H1 (cell line): ENCODE measurements at regions of chr11 and their contacts with region 1.

Region 1: GRCh38 chr11:14300661-14301304 is 58.2 kb downstream of the RRAS2 start:
- DNase-seq: peak in 1 of 2 experiments; percentile 23
- H3K4me3 ChIP-seq: no peak overlapping the region
- H3K27ac ChIP-seq: no peak overlapping the region
- H3K4me1 ChIP-seq: peaks cover 0 to 27% (median 5%) of the 10 kb centered on the region in 4 experiments; a peak in 5 of 7 replicates
- H3K27me3 ChIP-seq: no peaks in the 10 kb centered on the region
- CTCF ChIP-seq: peak; percentile 35 to 91 (median 88)
- EP300 ChIP-seq: no peak
- POLR2A ChIP-seq: no peak
- RAD21 ChIP-seq: peak; percentile 94 to 96

Region 2: GRCh38 chr11:14163576-14163975 is 137.2 kb before region 1 on chr11:
- CTCF ChIA-PET with region 1: no interaction called
- POLR2A ChIA-PET with region 1: no interaction called
- DNase-seq: no peak
- H3K4me3 ChIP-seq: no peak overlapping the region
- H3K27ac ChIP-seq: no peak overlapping the region
- H3K4me1 ChIP-seq: no peaks in the 10 kb centered on the region
- H3K27me3 ChIP-seq: no peaks in the 10 kb centered on the region
- CTCF ChIP-seq: no peak
- EP300 ChIP-seq: no peak
- POLR2A ChIP-seq: no peak
- RAD21 ChIP-seq: no peak

Region 3: GRCh38 chr11:14320020-14320419 is 19.2 kb after region 1 on chr11:
- CTCF ChIA-PET with region 1: interaction called, 14 read pairs
- POLR2A ChIA-PET with region 1: interaction called, 5 read pairs
- DNase-seq: no peak
- H3K4me3 ChIP-seq: no peak overlapping the region
- H3K27ac ChIP-seq: no peak overlapping the region; the same call in 1 of the 2 replicates
- H3K4me1 ChIP-seq: peaks cover 6 to 13% (median 7%) of the 10 kb centered on the region in 4 experiments; a peak in 5 of 7 replicates
- H3K27me3 ChIP-seq: no peaks in the 10 kb centered on the region
- CTCF ChIP-seq: no peak
- EP300 ChIP-seq: no peak
- POLR2A ChIP-seq: no peak
- RAD21 ChIP-seq: no peak

Region 4: GRCh38 chr11:14358729-14359439 is 58.1 kb after region 1 on chr11 and contains the start of gene RRAS2:
- CTCF ChIA-PET with region 1: interaction called, 11 read pairs
- POLR2A ChIA-PET with region 1: interaction called, 12 read pairs
- DNase-seq: peak in 1 of 2 experiments; percentile 84
- H3K4me3 ChIP-seq: peak within 1 kb of the TSS; percentile 85 to 99 (median 94)
- H3K27ac ChIP-seq: peak within 1 kb of the TSS; percentile 78; the same call in 1 of the 2 replicates
- H3K4me1 ChIP-seq: peaks cover 0 to 7% (median 4%) of the 10 kb centered on the region in 4 experiments; a peak in 6 of 7 replicates
- H3K27me3 ChIP-seq: no peaks in the 10 kb centered on the region
- CTCF ChIP-seq: no peak
- EP300 ChIP-seq: no peak
- POLR2A ChIP-seq: peak; percentile 74 to 81; a peak in 2 of 3 replicates
- RAD21 ChIP-seq: no peak
- total RNA-seq, gene RRAS2: 220 and 234 TPM in 2 replicates

Region 5: DNA sequence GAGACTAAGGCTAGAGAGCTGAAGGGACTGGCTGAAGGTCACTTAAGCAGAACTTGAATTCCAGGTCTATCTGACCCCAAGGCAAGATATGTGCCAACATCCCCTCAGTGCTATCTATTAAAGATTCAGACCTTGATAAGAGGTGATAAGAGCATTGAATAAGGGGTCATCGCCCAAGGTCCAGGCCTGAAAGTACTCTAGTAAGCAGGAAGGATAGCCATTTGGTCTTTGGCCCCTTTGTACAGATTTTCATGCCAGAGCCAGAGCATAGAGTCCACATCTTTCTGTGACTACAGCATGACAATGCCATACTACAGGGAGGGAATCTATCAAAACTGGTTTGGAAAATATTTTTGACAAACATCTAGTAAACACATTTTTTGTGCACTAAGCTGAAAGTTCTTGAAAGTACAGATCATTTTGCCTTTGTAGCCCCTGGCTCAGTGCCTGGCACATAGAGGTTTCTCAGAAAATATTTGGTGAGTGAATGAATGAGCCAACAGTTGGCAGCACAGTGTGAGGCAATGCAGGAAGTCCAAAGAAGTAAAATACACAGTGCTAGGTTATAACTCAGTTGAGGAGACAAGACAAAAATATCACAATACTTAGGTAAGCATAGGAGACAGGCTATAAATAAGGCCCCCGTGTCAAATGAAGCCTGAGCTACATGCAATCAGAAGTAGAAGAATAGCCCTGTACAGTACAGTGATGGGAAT is 73.3 kb after region 1 on chr11:
- CTCF ChIA-PET with region 1: interaction called, 36 read pairs
- POLR2A ChIA-PET with region 1: no interaction called
- DNase-seq: peak in 1 of 2 experiments; percentile 20
- H3K4me3 ChIP-seq: no peak overlapping the region
- H3K27ac ChIP-seq: no peak overlapping the region
- H3K4me1 ChIP-seq: peaks cover 0 to 8% (median 3%) of the 10 kb centered on the region in 4 experiments; a peak in 3 of 7 replicates
- H3K27me3 ChIP-seq: no peaks in the 10 kb centered on the region
- CTCF ChIP-seq: no peak
- EP300 ChIP-seq: no peak
- POLR2A ChIP-seq: no peak
- RAD21 ChIP-seq: no peak

Region 6: DNA sequence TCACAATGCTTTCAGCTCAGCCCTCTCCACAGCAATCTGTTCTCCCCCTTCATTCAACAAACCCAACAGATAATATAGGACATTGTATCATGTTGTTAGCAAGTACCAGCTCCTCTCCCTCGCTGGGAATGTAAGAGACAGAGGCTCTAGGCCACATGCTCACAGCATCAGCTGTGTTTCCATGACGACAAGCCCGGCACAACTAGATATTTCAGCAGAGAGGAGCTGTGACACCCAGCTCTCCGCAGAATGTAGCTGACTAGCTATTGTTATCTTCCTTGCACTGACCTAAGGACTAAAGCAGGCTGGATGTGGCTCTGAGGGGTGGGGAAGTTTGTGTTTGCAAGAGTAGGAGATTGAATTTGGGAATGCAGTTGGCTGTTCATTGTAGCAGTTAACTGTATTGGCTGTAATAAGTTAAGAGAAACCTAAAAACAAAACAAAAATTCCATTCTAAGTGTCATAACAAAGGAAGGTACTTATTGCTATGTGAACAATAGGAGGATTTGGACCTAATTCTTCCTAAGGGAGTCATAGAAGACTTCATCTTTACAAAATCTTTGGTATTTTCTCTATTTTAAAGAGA is 86.2 kb after region 1 on chr11:
- CTCF ChIA-PET with region 1: interaction called, 20 read pairs
- POLR2A ChIA-PET with region 1: interaction called, 3 read pairs
- DNase-seq: peak; percentile 15 to 66
- H3K4me3 ChIP-seq: no peak overlapping the region
- H3K27ac ChIP-seq: no peak overlapping the region
- H3K4me1 ChIP-seq: peaks cover 0 to 9% (median 3%) of the 10 kb centered on the region in 4 experiments; a peak in 2 of 7 replicates
- H3K27me3 ChIP-seq: peaks cover 0 to 4% (median 1%) of the 10 kb centered on the region in 4 experiments; a peak in 4 of 7 replicates
- CTCF ChIP-seq: no peak
- EP300 ChIP-seq: no peak
- POLR2A ChIP-seq: no peak
- RAD21 ChIP-seq: no peak

Region 7: DNA sequence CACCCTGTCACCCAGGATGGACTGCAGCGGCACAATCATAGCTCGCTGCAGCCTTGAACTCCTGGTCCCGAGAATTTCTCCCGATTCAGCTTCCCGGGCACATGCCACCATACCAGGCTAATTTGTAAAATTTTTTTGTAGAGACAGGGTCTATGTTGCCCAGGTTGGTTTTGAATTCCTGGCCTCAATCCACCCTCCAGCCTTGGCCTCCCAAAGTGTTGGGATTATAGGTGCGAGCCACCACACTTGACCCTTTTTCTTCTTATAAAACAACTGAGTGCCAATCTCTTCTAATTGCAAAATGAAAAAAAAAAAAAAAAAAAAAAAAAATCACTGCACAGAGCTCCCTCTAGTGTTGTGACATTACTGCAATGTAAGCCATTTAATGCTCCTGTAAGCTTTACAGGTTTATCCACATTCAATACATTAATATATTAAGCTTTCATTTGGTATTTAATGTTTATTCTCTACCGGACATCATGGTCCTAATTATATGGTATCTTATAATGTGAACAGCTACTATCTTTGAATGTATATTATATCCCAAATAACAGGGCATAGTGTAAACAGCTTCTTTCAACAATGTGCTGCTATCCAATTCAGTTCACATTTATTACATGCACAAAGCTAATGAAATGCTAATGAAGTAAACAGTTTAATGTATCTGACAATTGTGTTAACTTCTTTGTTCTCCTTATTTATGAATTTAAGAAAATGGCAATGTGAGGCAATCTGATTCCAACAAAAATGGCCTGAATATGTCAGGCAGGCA is 154.3 kb after region 1 on chr11:
- CTCF ChIA-PET with region 1: interaction called, 127 read pairs
- POLR2A ChIA-PET with region 1: no interaction called
- DNase-seq: peak in 1 of 2 experiments; percentile 52
- H3K4me3 ChIP-seq: no peak overlapping the region
- H3K27ac ChIP-seq: no peak overlapping the region
- H3K4me1 ChIP-seq: no peaks in the 10 kb centered on the region
- H3K27me3 ChIP-seq: no peaks in the 10 kb centered on the region
- CTCF ChIP-seq: peak in 2 of 3 experiments; percentile 35 to 42; a peak in 2 of 4 replicates
- EP300 ChIP-seq: no peak
- POLR2A ChIP-seq: no peak
- RAD21 ChIP-seq: peak; percentile 53 to 65

Region 8: GRCh38 chr11:14611939-14612338 is 311.2 kb after region 1 on chr11:
- CTCF ChIA-PET with region 1: no interaction called
- POLR2A ChIA-PET with region 1: no interaction called
- DNase-seq: no peak
- H3K4me3 ChIP-seq: no peak overlapping the region
- H3K27ac ChIP-seq: no peak overlapping the region
- H3K4me1 ChIP-seq: no peaks in the 10 kb centered on the region; a peak in 1 of 7 replicates
- H3K27me3 ChIP-seq: no peaks in the 10 kb centered on the region
- CTCF ChIP-seq: no peak
- EP300 ChIP-seq: no peak
- POLR2A ChIP-seq: no peak
- RAD21 ChIP-seq: no peak